Activated CD4-positive, alpha-beta memory T cell treated with anti-CD3 and anti-CD28 coated beads for 36 hours (primary cell): ENCODE measurements at regions of chr3 and their contacts with region 1.

Region 1: DNA sequence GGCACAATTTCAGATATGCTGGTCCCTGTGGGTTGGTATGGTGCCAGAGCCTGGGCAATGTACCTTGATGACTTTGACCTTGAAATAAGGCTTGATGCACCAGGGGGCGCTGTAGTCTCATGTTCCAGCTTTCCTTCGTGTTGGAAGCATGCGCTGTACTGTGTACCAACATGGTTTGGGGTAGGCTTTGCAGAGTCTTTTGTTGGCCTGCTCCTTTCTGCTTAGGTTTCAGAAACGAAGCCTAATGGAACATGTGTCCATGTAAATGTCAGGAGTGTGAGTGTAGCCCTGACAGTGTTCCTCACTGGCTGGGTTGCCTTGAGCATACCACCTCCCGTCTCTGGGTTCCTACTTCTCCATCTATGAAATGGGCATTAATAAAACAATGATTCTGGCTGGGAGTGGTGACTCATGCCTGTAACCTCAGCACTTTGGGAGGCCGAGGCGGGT is 3.6 kb upstream of the CCR4 start:
- DNase-seq: peak; percentile 96
- H3K4me3 Mint-ChIP-seq: no peak overlapping the region
- H3K27ac Mint-ChIP-seq: peak overlapping the region; percentile 97
- H3K4me1 Mint-ChIP-seq: peaks cover 46% of the 10 kb centered on the region
- H3K27me3 Mint-ChIP-seq: no peaks in the 10 kb centered on the region

Region 2: GRCh38 chr3:32992322-32992692 is 44.5 kb after region 1 on chr3:
- CTCF ChIA-PET with region 1: interaction called, 21 read pairs
- POLR2A ChIA-PET with region 1: interaction called, 41 read pairs
- intact Hi-C with region 1: loop called (anchors 1 kb)
- DNase-seq: no peak
- H3K4me3 Mint-ChIP-seq: peak overlapping the region; percentile 73
- H3K27ac Mint-ChIP-seq: peak overlapping the region; percentile 92
- H3K4me1 Mint-ChIP-seq: peaks cover 87% of the 10 kb centered on the region
- H3K27me3 Mint-ChIP-seq: no peaks in the 10 kb centered on the region

Region 3: GRCh38 chr3:33023172-33024136 is 75.6 kb after region 1 on chr3:
- CTCF ChIA-PET with region 1: interaction called, 36 read pairs
- POLR2A ChIA-PET with region 1: interaction called, 25 read pairs
- intact Hi-C with region 1: loop called (anchors 1 kb)
- DNase-seq: no peak
- H3K4me3 Mint-ChIP-seq: peak overlapping the region; percentile 7
- H3K27ac Mint-ChIP-seq: peak overlapping the region; percentile 90
- H3K4me1 Mint-ChIP-seq: peaks cover 60% of the 10 kb centered on the region
- H3K27me3 Mint-ChIP-seq: no peaks in the 10 kb centered on the region

Region 4: DNA sequence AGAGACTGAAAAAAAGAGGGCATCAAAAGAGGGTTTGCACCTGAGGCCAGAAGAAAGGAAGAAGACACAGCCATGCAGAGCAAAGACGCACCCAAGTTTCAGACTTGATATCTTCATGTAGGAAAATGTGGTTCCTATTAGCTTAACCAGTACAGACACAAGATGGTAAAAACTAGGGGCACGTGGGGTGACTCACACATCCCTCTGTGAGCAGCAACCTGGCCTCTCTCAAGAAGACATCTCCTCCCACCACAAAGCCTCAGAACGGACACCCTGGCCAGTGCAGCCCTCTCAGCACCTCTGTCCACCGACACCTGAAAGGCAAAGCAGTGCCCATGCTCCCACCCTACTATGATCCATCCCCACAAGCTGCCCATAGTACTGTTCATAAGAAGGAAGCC is 115.8 kb after region 1 on chr3:
- CTCF ChIA-PET with region 1: interaction called, 19 read pairs
- POLR2A ChIA-PET with region 1: interaction called, 16 read pairs
- intact Hi-C with region 1: loop called (anchors 1 kb)
- DNase-seq: peak; percentile 83
- H3K4me3 Mint-ChIP-seq: peak overlapping the region; percentile 56
- H3K27ac Mint-ChIP-seq: peak overlapping the region; percentile 93
- H3K4me1 Mint-ChIP-seq: peaks cover 79% of the 10 kb centered on the region
- H3K27me3 Mint-ChIP-seq: no peaks in the 10 kb centered on the region

Region 5: GRCh38 chr3:33131331-33132018 is 183.7 kb after region 1 on chr3:
- CTCF ChIA-PET with region 1: interaction called, 21 read pairs
- POLR2A ChIA-PET with region 1: no interaction called
- intact Hi-C with region 1: no loop called
- DNase-seq: peak; percentile 32
- H3K4me3 Mint-ChIP-seq: no peak overlapping the region
- H3K27ac Mint-ChIP-seq: no peak overlapping the region
- H3K4me1 Mint-ChIP-seq: peaks cover 9% of the 10 kb centered on the region
- H3K27me3 Mint-ChIP-seq: no peaks in the 10 kb centered on the region

Region 6: GRCh38 chr3:33717866-33718594 is 770.2 kb after region 1 on chr3 and contains the start of gene CLASP2:
- CTCF ChIA-PET with region 1: no interaction called
- POLR2A ChIA-PET with region 1: no interaction called
- intact Hi-C with region 1: loop called (anchors 10 kb)
- DNase-seq: peak; percentile 89
- H3K4me3 Mint-ChIP-seq: peak within 1 kb of the TSS; percentile 85
- H3K27ac Mint-ChIP-seq: peak within 1 kb of the TSS; percentile 90
- H3K4me1 Mint-ChIP-seq: peaks cover 9% of the 10 kb centered on the region
- H3K27me3 Mint-ChIP-seq: no peaks in the 10 kb centered on the region
- total RNA-seq, gene CLASP2: 41.8 to 46.6 TPM